ENCODE measurements at regions of chr17 and their contacts with region 1.

Region 1: DNA sequence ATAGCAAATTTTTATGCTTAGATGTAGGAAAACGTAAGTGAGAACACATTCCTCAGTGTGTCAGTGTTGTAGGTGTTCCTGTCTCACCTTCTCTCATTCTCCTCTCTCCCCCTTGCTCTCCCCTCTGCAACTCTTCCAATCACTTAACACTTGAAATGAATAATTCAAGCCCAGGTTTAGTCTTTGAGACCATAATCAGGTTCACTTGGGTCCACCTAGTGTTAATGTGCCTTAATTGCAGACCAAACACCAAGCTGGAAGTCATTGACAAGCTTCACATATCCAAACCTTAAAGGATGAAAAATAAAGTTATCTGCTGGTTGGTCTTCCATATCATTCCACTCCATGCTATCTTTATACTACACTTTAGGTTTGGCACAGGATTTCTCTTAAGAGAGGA is 37.0 kb downstream of the STXBP4 start:
- DNase-seq: no peak
- H3K4me3 ChIP-seq: no peak overlapping the region
- H3K27ac ChIP-seq: no peak overlapping the region
- H3K4me1 ChIP-seq: no peaks in the 10 kb centered on the region
- H3K27me3 ChIP-seq: no peaks in the 10 kb centered on the region
- CTCF ChIP-seq: peak in 2 of 3 experiments; percentile 37 to 64; a peak in 2 of 4 replicates
- EP300 ChIP-seq: no peak
- POLR2A ChIP-seq: no peak
- RAD21 ChIP-seq: peak; percentile 27 to 48; a peak in 3 of 4 replicates

Region 2: GRCh38 chr17:54992797-54993639 is 12.5 kb before region 1 on chr17:
- CTCF ChIA-PET with region 1: interaction called, 107 read pairs
- POLR2A ChIA-PET with region 1: interaction called, 5 read pairs
- DNase-seq: no peak
- H3K4me3 ChIP-seq: no peak overlapping the region
- H3K27ac ChIP-seq: no peak overlapping the region
- H3K4me1 ChIP-seq: no peaks in the 10 kb centered on the region
- H3K27me3 ChIP-seq: no peaks in the 10 kb centered on the region
- CTCF ChIP-seq: peak in 2 of 3 experiments; percentile 45 to 47; a peak in 2 of 4 replicates
- EP300 ChIP-seq: no peak
- POLR2A ChIP-seq: no peak
- RAD21 ChIP-seq: peak; percentile 63 to 67

Region 3: GRCh38 chr17:55023626-55024025 is 18.1 kb after region 1 on chr17:
- CTCF ChIA-PET with region 1: interaction called, 21 read pairs
- POLR2A ChIA-PET with region 1: no interaction called
- DNase-seq: no peak
- H3K4me3 ChIP-seq: no peak overlapping the region
- H3K27ac ChIP-seq: no peak overlapping the region
- H3K4me1 ChIP-seq: no peaks in the 10 kb centered on the region; a peak in 1 of 7 replicates
- H3K27me3 ChIP-seq: no peaks in the 10 kb centered on the region
- CTCF ChIP-seq: no peak
- EP300 ChIP-seq: no peak
- POLR2A ChIP-seq: no peak
- RAD21 ChIP-seq: no peak

Region 4: DNA sequence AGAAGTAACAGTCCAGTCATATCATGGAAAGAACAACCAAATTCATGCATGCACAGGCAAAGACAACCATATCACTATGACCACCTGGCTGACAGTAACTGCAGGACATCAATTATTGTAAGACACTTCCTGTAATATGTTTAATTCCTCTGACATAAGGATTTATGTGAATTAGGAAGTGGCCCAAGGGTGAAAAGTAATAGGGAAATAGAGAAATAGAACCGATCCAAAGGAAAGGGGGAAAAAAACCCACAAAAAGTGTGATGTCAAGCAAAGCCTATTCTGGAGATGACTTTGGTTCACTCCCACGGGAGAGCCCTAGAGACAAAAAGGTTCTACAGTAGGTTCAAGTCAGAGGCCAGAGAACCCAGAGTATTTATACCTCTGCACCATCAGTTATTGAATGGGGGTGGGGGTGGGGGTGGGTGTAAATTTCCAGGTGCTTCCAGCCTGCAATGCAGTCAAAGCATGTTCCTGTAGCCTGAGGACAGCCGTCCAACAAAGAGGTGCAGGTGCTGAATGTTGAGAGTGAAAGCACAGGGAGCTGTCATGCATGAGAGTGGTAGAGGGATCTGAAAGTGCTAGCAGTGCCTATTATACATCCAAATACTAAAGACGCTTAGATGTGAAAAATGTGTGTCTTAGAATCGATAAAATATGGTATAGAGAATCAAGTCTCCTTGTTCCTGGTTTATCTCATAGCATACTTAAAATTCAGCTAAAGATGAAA is 163.6 kb after region 1 on chr17:
- CTCF ChIA-PET with region 1: no interaction called
- POLR2A ChIA-PET with region 1: no interaction called
- DNase-seq: no peak
- H3K4me3 ChIP-seq: no peak overlapping the region
- H3K27ac ChIP-seq: no peak overlapping the region
- H3K4me1 ChIP-seq: no peaks in the 10 kb centered on the region
- H3K27me3 ChIP-seq: no peaks in the 10 kb centered on the region
- CTCF ChIP-seq: no peak
- EP300 ChIP-seq: no peak
- POLR2A ChIP-seq: no peak
- RAD21 ChIP-seq: no peak

Measured in H1 (cell line).